GM12878 (cell line): ENCODE measurements at regions of chr10 and their contacts with region 1.

Region 1: DNA sequence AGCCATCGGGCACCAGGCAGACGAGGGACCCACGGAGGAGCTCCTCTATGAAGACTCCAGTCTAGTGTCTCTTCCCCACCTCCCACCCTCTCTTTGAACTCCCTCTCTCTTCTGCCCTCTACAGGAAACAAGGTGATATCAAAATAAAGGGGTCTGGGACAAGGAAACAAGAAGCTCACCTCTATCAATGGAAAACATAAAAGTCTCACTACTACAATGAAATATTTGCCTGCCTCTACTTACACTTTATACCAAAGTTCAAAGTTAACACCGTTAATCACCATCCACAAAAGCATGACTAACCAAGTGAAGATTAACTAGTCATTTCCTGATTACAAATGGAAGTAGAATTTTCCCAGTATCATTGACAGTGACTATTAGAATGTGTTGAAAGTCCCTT is 82.2 kb downstream of the PARD3 start:
- DNase-seq: no peak
- ATAC-seq: peak; percentile 65
- H3K4me3 ChIP-seq: no peak overlapping the region
- H3K27ac ChIP-seq: no peak overlapping the region
- H3K4me1 ChIP-seq: no peaks in the 10 kb centered on the region
- H3K27me3 ChIP-seq: 0 out of 4 replicates have a peak, but pooled peaks cover 0 to 3% of the 10 kb centered on the region in 2 experiments
- CTCF ChIP-seq: peak; percentile 19 to 40 (median 36); a peak in 5 of 6 replicates
- EP300 ChIP-seq: no peak
- POLR2A ChIP-seq: no peak
- RAD21 ChIP-seq: 0 out of 2 replicates have a peak, but pooled peaks have one; percentile 16

Region 2: DNA sequence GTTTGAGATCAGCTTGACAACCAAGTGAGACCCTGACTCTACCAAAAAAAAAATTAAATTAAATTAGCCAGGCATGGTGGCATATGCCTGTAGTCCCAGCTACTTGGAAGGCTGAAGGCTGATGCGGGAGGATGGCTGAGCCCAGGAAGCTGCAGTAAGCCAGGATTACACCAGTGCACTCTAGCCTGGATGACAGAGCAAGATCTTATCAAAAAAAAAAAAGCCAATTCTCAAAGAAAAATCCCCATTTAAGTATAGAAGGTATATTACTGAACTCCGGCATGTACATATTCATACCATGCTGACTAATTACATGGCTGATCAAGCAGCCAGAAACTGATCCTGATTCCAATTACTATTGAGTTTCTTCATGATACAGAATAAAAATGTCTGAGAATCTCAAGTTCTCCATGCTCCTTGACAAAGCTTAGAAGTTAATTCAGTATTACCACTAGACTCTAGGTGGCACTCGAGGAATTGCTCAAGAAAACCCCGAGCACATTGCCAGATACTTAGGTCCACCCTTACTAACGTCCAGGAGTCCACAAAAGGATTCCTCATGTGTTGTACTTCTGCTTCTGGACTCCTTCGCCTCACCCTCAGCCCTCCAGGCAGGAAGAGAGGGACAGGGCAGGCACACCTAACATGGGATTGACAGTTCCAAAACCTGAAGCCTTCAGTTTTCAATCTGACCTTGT is 66.8 kb before region 1 on chr10:
- CTCF ChIA-PET with region 1: interaction called, 9 read pairs
- POLR2A ChIA-PET with region 1: interaction called, 3 read pairs
- RAD21 ChIA-PET with region 1: interaction called, 4 read pairs
- SMC1A ChIA-PET with region 1: interaction called, 15 read pairs
- in situ Hi-C with region 1: no loop called
- intact Hi-C with region 1: no loop called
- DNase-seq: peak; percentile 53
- ATAC-seq: peak; percentile 91
- H3K4me3 ChIP-seq: no peak overlapping the region
- H3K27ac ChIP-seq: no peak overlapping the region
- H3K4me1 ChIP-seq: no peaks in the 10 kb centered on the region; the same call in 1 of the 2 replicates
- H3K27me3 ChIP-seq: no peaks in the 10 kb centered on the region
- CTCF ChIP-seq: peak; percentile 55 to 72 (median 61); a peak in 5 of 6 replicates
- EP300 ChIP-seq: no peak
- POLR2A ChIP-seq: no peak
- RAD21 ChIP-seq: peak; percentile 72

Region 3: DNA sequence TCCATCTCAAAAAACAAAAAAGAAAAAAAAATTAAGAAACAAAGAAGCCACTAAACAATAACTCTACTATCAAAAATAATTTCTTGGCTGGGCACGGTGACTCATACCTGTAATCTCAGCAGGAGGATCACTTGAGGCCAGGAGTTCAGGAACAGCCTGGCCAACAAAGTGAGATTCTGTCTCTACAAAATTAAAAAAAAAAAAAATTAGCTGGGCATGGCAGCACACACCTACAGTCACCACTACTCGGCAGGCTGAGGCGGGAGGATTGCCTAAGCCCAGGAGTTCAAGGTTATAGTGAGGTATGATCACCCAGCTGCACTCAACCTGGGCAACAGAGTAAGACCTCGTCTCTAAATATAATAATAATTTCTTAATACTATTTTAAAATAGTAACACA is 13.2 kb after region 1 on chr10:
- CTCF ChIA-PET with region 1: interaction called, 90 read pairs
- POLR2A ChIA-PET with region 1: interaction called, 8 read pairs
- RAD21 ChIA-PET with region 1: interaction called, 17 read pairs
- SMC1A ChIA-PET with region 1: interaction called, 56 read pairs
- in situ Hi-C with region 1: no loop called
- intact Hi-C with region 1: no loop called
- DNase-seq: no peak
- ATAC-seq: peak; percentile 47
- H3K4me3 ChIP-seq: no peak overlapping the region
- H3K27ac ChIP-seq: no peak overlapping the region
- H3K4me1 ChIP-seq: no peaks in the 10 kb centered on the region
- H3K27me3 ChIP-seq: no peaks in the 10 kb centered on the region; a peak in 3 of 4 replicates
- CTCF ChIP-seq: no peak
- EP300 ChIP-seq: no peak
- POLR2A ChIP-seq: no peak
- RAD21 ChIP-seq: no peak

Region 4: GRCh38 chr10:34758447-34758996 is 25.6 kb after region 1 on chr10:
- CTCF ChIA-PET with region 1: interaction called, 90 read pairs
- POLR2A ChIA-PET with region 1: interaction called, 4 read pairs
- RAD21 ChIA-PET with region 1: interaction called, 12 read pairs
- SMC1A ChIA-PET with region 1: interaction called, 56 read pairs
- in situ Hi-C with region 1: no loop called
- intact Hi-C with region 1: no loop called
- DNase-seq: peak; percentile 34
- ATAC-seq: peak; percentile 76
- H3K4me3 ChIP-seq: no peak overlapping the region
- H3K27ac ChIP-seq: no peak overlapping the region
- H3K4me1 ChIP-seq: no peaks in the 10 kb centered on the region
- H3K27me3 ChIP-seq: no peaks in the 10 kb centered on the region
- CTCF ChIP-seq: no peak
- EP300 ChIP-seq: no peak
- POLR2A ChIP-seq: no peak
- RAD21 ChIP-seq: no peak

Region 5: GRCh38 chr10:34808801-34809745 is 76.1 kb after region 1 on chr10:
- CTCF ChIA-PET with region 1: interaction called, 24 read pairs
- POLR2A ChIA-PET with region 1: interaction called, 3 read pairs
- RAD21 ChIA-PET with region 1: interaction called, 8 read pairs
- SMC1A ChIA-PET with region 1: interaction called, 20 read pairs
- in situ Hi-C with region 1: no loop called
- intact Hi-C with region 1: no loop called
- DNase-seq: no peak
- ATAC-seq: peak; percentile 67
- H3K4me3 ChIP-seq: no peak overlapping the region; the same call in 1 of the 2 replicates
- H3K27ac ChIP-seq: no peak overlapping the region
- H3K4me1 ChIP-seq: no peaks in the 10 kb centered on the region
- H3K27me3 ChIP-seq: peaks cover 0 to 8% of the 10 kb centered on the region in 2 experiments; a peak in 3 of 4 replicates
- CTCF ChIP-seq: no peak
- EP300 ChIP-seq: no peak
- POLR2A ChIP-seq: no peak
- RAD21 ChIP-seq: no peak

Region 6: GRCh38 chr10:34916314-34916713 is 183.4 kb after region 1 on chr10:
- CTCF ChIA-PET with region 1: no interaction called
- POLR2A ChIA-PET with region 1: no interaction called
- RAD21 ChIA-PET with region 1: no interaction called
- SMC1A ChIA-PET with region 1: no interaction called
- in situ Hi-C with region 1: no loop called
- intact Hi-C with region 1: no loop called
- DNase-seq: no peak
- ATAC-seq: peak; percentile 77
- H3K4me3 ChIP-seq: no peak overlapping the region
- H3K27ac ChIP-seq: no peak overlapping the region
- H3K4me1 ChIP-seq: no peaks in the 10 kb centered on the region
- H3K27me3 ChIP-seq: no peaks in the 10 kb centered on the region
- CTCF ChIP-seq: no peak
- EP300 ChIP-seq: no peak
- POLR2A ChIP-seq: no peak
- RAD21 ChIP-seq: no peak